Natural killer cell (primary cell): ENCODE measurements at regions of chr4 and their contacts with region 1.

Region 1: GRCh38 chr4:1683736-1684505 is at the start of gene FAM53A:
- DNase-seq: peak; percentile 39 to 94
- ATAC-seq: peak; percentile 93 to 98 (median 96)
- H3K4me3 ChIP-seq: peak within 1 kb of the TSS; percentile 48
- H3K4me3 Mint-ChIP-seq: peak within 1 kb of the TSS; percentile 90
- H3K27ac ChIP-seq: peak within 1 kb of the TSS; percentile 49
- H3K27ac Mint-ChIP-seq: peak within 1 kb of the TSS; percentile 79 to 82
- H3K4me1 ChIP-seq: peaks cover 17% of the 10 kb centered on the region
- H3K4me1 Mint-ChIP-seq: peaks cover 7 to 11% of the 10 kb centered on the region in 2 donors
- H3K27me3 ChIP-seq: no peaks in the 10 kb centered on the region
- H3K27me3 Mint-ChIP-seq: no peaks in the 10 kb centered on the region
- CTCF ChIP-seq: no peak
- total RNA-seq, gene FAM53A: 1.9 to 2.9 (median 2.3) TPM

Region 2: DNA sequence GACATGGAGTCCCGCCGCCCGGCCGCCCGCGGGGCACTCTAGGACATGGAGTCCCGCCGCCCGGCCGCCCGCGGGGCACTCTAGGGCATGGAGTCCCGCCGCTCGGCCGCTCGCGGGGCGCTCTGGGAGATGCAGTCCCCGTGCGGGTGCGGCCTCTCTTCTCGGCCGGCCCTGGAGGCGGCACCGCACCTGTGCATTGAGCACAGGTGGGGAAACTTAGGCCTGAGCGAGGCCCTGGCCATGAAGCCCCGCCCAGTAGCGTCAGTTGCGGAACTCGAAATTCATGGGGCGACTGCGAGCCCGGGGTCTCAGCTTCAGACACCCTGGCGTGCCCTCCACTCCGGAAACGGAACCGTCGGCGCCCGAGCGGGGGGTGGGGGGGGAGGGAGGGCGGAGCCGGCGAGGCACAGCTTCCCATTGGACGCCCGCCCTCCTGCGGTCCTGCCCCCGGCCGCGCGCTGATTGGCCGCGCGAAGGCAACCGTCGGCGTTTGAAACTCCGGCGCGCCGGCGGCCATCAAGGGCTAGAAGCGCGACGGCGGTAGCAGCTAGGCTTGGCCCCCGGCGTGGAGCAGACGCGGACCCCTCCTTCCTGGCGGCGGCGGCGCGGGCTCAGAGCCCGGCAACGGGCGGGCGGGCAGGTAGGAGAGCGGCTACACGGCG is 37.2 kb after region 1 on chr4 and contains the starts of genes TACC3 and TMEM129:
- intact Hi-C with region 1: loop called (anchors 5 kb)
- DNase-seq: peak; percentile 90 to 98
- ATAC-seq: peak; percentile 80 to 90 (median 84)
- H3K4me3 ChIP-seq: peak within 1 kb of the TSS; percentile 52
- H3K4me3 Mint-ChIP-seq: peak within 1 kb of the TSS; percentile 89
- H3K27ac ChIP-seq: peak within 1 kb of the TSS; percentile 77
- H3K27ac Mint-ChIP-seq: peak within 1 kb of the TSS; percentile 92 to 93
- H3K4me1 ChIP-seq: peaks cover 64% of the 10 kb centered on the region
- H3K4me1 Mint-ChIP-seq: peaks cover 25 to 39% of the 10 kb centered on the region in 2 donors
- H3K27me3 ChIP-seq: no peaks in the 10 kb centered on the region
- H3K27me3 Mint-ChIP-seq: no peaks in the 10 kb centered on the region
- CTCF ChIP-seq: no peak
- total RNA-seq, gene TACC3: 23.4 to 43.7 (median 32.5) TPM
- total RNA-seq, gene TMEM129: 18.2 to 26.9 (median 20.8) TPM